ENCODE measurements at regions of chr11 and their contacts with region 1.

Region 1: GRCh38 chr11:304915-305843 is 2.4 kb upstream of the IFITM2 start:
- DNase-seq: no peak
- ATAC-seq: peak; percentile 28
- H3K4me3 Mint-ChIP-seq: no peak overlapping the region
- H3K27ac Mint-ChIP-seq: peak overlapping the region; percentile 35
- H3K4me1 Mint-ChIP-seq: peaks cover 55% of the 10 kb centered on the region
- H3K27me3 Mint-ChIP-seq: no peaks in the 10 kb centered on the region
- CTCF ChIP-seq: no peak

Region 2: GRCh38 chr11:236774-237767 is 68.1 kb before region 1 on chr11 and contains the start of gene PSMD13:
- CTCF ChIA-PET with region 1: interaction called, 3 read pairs
- POLR2A ChIA-PET with region 1: interaction called, 4 read pairs
- intact Hi-C with region 1: loop called (anchors 2 kb)
- DNase-seq: peak; percentile 85
- ATAC-seq: peak; percentile 78
- H3K4me3 Mint-ChIP-seq: peak within 1 kb of the TSS; percentile 98
- H3K27ac Mint-ChIP-seq: peak within 1 kb of the TSS; percentile 99
- H3K4me1 Mint-ChIP-seq: peaks cover 41% of the 10 kb centered on the region
- H3K27me3 Mint-ChIP-seq: no peaks in the 10 kb centered on the region
- CTCF ChIP-seq: no peak
- total RNA-seq, gene PSMD13: 147 and 149 TPM in 2 replicates

Region 3: GRCh38 chr11:279966-280582 is 25.1 kb before region 1 on chr11:
- CTCF ChIA-PET with region 1: interaction called, 5 read pairs
- POLR2A ChIA-PET with region 1: interaction called, 10 read pairs
- intact Hi-C with region 1: no loop called
- DNase-seq: peak; percentile 43
- ATAC-seq: peak; percentile 71
- H3K4me3 Mint-ChIP-seq: peak overlapping the region; percentile 74
- H3K27ac Mint-ChIP-seq: no peak overlapping the region
- H3K4me1 Mint-ChIP-seq: peaks cover 32% of the 10 kb centered on the region
- H3K27me3 Mint-ChIP-seq: peaks cover 19% of the 10 kb centered on the region
- CTCF ChIP-seq: no peak

Region 4: GRCh38 chr11:355581-356458 is 50.6 kb after region 1 on chr11:
- CTCF ChIA-PET with region 1: interaction called, 12 read pairs
- POLR2A ChIA-PET with region 1: interaction called, 20 read pairs
- intact Hi-C with region 1: loop called (anchors 1 kb)
- DNase-seq: peak; percentile 70
- ATAC-seq: peak; percentile 72
- H3K4me3 Mint-ChIP-seq: peak overlapping the region; percentile 77
- H3K27ac Mint-ChIP-seq: peak overlapping the region; percentile 90
- H3K4me1 Mint-ChIP-seq: peaks cover 26% of the 10 kb centered on the region
- H3K27me3 Mint-ChIP-seq: no peaks in the 10 kb centered on the region
- CTCF ChIP-seq: no peak

Region 5: DNA sequence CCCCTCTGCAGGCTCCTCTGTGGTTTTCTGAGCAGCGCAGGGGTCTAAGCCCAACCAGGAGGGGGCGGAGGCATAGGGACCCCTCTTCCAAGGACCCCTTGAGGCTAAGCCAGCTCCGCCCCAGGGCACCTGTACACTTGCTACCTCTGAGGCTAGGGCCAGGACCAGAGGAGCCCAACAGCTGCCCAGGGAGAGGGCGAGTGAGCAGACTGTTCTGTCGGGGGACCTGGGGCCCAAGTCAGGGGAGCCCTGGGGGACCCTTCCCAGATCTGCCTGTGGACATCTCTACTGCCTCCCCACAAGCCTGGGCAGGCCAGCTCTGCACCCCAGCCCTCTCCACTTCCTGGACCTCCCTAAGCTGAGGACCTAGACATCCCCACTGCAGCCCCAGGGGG is 65.9 kb after region 1 on chr11:
- CTCF ChIA-PET with region 1: no interaction called
- POLR2A ChIA-PET with region 1: no interaction called
- intact Hi-C with region 1: no loop called
- DNase-seq: no peak
- ATAC-seq: no peak
- H3K4me3 Mint-ChIP-seq: no peak overlapping the region
- H3K27ac Mint-ChIP-seq: no peak overlapping the region
- H3K4me1 Mint-ChIP-seq: peaks cover 12% of the 10 kb centered on the region
- H3K27me3 Mint-ChIP-seq: peaks cover 29% of the 10 kb centered on the region
- CTCF ChIP-seq: no peak

Region 6: DNA sequence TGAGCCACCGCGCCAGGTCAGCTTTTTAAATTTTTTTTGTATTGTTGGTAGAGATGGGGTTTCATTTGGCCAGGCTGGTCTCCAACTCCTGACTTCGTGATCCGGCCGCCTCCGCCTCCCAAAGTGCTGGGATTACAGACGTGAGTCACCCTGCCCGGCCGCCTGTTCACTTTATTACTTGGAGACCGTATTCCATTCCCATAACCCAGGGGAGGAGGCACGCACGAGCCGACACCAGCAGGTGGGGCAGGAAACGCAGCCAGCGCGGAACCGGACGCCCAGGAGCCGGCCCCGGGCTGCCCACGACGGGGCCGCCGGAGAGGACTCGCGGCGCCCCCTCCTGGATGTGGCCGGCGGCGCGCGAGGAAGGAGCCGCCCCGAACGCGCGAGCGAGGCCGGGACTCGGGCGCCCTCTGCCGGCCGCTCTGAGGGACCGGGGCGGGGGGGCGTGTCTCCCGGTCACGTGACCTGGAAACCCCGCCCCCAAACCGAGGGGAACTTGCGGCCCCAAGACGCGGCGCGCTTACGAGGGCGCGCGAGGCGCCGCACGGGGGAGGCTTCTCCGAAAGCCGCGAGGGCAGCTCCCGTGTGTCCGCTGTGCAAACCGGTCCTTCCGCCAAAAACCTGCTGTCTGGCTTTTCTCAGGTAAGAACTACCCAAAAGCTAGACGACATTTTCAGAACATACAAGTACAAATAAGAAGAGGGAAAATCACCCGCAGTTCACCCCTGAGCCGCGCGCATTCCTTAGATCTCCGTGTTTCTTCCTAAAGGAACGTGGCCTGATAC is 213.5 kb after region 1 on chr11:
- CTCF ChIA-PET with region 1: no interaction called
- POLR2A ChIA-PET with region 1: no interaction called
- intact Hi-C with region 1: loop called (anchors 5 kb)
- DNase-seq: peak; percentile 90
- ATAC-seq: peak; percentile 98
- H3K4me3 Mint-ChIP-seq: peak overlapping the region; percentile 79
- H3K27ac Mint-ChIP-seq: peak overlapping the region; percentile 83
- H3K4me1 Mint-ChIP-seq: peaks cover 5% of the 10 kb centered on the region
- H3K27me3 Mint-ChIP-seq: no peaks in the 10 kb centered on the region
- CTCF ChIP-seq: peak; percentile 71

Region 7: DNA sequence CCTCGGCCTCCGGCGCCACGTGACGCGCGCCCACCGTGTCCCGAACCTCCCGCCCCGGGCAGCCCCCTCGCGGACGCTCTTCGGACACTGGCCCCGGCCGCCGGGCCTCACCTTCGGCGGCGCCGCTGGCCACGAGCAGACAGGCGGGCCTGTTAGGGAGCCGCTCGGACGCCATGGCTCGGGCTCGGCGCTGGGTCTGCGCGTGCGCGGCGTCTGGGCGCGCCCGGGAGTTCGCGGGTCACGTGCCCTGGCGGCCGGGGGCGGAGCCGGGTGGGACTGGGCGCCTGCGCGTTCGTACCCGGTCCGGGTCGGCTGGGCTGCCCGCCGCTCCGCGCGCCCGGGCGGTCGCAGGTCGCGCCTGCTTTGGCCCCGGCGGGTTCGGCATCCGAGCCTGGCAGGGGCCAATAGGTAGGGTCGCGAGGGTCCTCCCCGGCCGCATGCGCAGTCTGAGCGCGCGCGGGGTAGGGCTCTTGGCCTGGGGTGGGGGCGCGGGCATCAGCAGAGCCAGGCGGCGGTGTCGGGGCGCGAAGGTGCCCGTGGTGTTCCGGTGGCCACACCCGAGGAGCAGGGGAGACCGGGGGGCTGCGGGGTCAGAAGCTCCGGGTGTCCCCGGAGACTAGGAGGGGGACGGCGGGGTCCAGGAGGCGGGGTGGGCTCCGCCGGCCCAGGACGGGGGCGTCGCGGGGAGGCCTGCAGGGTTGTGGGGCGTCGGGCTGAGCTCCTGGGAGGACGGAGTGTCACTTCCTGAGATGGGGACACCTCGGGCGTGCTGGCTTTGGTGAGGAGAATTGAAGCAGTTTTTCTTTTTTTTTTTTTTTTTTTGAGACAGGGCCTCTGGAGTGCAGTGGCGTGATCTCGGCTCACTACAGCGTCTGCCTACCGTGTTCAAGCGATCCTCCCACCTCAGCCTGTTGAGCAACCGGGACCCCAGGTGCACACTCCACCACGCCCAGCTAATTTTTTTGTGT is 472.4 kb after region 1 on chr11 and contains the start of gene GATD1:
- CTCF ChIA-PET with region 1: no interaction called
- POLR2A ChIA-PET with region 1: no interaction called
- intact Hi-C with region 1: no loop called
- DNase-seq: peak; percentile 98
- ATAC-seq: peak; percentile 87
- H3K4me3 Mint-ChIP-seq: peak within 1 kb of the TSS; percentile 81
- H3K27ac Mint-ChIP-seq: peak within 1 kb of the TSS; percentile 69
- H3K4me1 Mint-ChIP-seq: peaks cover 16% of the 10 kb centered on the region
- H3K27me3 Mint-ChIP-seq: no peaks in the 10 kb centered on the region
- CTCF ChIP-seq: no peak
- total RNA-seq, gene GATD1: 60.3 and 63.3 TPM in 2 replicates